ENCODE measurements at regions of chr11 and their contacts with region 1.

Region 1: GRCh38 chr11:86978756-86979608 is 23.8 kb upstream of the FZD4 start:
- DNase-seq: peak; percentile 19
- H3K4me3 Mint-ChIP-seq: no peak overlapping the region
- H3K27ac Mint-ChIP-seq: no peak overlapping the region
- H3K4me1 Mint-ChIP-seq: no peaks in the 10 kb centered on the region
- H3K27me3 Mint-ChIP-seq: no peaks in the 10 kb centered on the region

Region 2: DNA sequence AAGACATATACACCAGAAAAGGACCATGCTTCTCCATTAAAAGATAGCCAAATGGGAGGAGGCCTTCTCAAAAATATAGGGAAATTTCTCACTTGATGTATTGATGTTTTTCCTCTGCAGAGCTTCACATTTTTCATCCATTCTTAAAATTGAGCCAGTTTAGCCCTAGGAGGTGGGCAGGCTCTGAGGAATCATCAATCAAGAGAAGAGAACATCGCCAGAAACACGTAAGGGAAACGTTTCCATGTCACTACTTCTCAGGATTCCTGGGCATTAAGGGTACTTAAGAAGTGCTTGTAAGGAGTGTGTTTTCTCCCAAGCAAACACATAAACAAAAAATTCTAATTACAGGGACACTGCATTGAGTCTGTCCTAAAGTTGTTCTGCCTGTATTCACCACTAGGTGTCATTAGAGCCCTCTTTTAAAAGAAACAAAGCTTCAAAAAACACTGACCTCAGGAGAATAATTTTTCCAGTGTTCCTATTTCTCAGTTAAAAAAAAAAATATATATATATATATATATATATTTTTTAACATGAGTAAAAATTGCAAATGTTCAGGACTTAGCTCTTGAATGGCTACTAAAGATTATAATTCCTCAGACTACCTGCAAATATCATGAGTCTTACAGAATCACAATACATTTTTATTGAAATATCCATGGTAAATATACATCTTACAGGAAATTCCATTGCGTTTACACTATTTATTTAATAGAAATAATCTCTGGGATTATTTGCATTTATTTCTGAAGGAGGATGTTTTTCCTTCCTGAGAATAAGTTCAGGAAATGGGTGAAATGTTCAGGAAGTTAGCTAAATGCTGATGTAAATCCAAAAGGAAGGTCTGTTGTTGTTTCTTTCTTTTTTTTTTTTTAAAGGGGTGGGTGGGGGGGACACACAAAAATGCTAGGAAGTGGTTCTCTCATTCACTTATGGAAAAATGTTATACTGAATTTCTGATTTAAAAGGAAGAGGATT is 39.8 kb before region 1 on chr11:
- CTCF ChIA-PET with region 1: interaction called, 3 read pairs
- intact Hi-C with region 1: loop called (anchors 2 kb)
- DNase-seq: no peak
- H3K4me3 Mint-ChIP-seq: no peak overlapping the region
- H3K27ac Mint-ChIP-seq: no peak overlapping the region
- H3K4me1 Mint-ChIP-seq: no peaks in the 10 kb centered on the region
- H3K27me3 Mint-ChIP-seq: peaks cover 6% of the 10 kb centered on the region

Measured in activated naive CD4-positive, alpha-beta T cell treated with anti-CD3 and anti-CD28 coated beads for 36 hours (primary cell).